Dendritic cell treated with granulocyte-macrophage colony-stimulating factor and Interleukin-4, amounts not matched to agents 40 ng/mL and 50 ng/mL, for 4 days (primary cell): ENCODE measurements at regions of chr15 and their contacts with region 1.

Region 1: DNA sequence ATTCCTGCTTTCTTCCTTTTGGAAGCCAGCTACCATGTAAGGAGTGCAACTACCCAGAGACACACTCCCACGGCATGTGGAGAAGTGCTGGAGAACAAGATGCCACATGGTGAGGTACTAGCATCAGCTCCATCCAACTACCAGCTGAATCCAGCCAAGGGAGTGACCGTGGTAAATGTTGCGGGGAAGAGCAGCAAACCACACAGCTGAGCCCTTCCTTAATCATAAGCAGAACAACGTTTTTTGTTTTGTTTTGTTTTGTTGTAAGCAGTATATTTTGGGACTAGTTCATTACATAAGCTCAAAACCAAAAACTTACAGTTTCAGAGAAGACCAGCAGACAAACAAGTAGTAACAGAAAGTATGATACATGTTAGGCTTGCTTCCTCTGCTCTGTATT is 212.6 kb upstream of the ATP10A start:
- H3K4me3 Mint-ChIP-seq: no peak overlapping the region
- H3K27ac Mint-ChIP-seq: no peak overlapping the region
- H3K4me1 Mint-ChIP-seq: no peaks in the 10 kb centered on the region
- H3K27me3 Mint-ChIP-seq: no peaks in the 10 kb centered on the region

Region 2: DNA sequence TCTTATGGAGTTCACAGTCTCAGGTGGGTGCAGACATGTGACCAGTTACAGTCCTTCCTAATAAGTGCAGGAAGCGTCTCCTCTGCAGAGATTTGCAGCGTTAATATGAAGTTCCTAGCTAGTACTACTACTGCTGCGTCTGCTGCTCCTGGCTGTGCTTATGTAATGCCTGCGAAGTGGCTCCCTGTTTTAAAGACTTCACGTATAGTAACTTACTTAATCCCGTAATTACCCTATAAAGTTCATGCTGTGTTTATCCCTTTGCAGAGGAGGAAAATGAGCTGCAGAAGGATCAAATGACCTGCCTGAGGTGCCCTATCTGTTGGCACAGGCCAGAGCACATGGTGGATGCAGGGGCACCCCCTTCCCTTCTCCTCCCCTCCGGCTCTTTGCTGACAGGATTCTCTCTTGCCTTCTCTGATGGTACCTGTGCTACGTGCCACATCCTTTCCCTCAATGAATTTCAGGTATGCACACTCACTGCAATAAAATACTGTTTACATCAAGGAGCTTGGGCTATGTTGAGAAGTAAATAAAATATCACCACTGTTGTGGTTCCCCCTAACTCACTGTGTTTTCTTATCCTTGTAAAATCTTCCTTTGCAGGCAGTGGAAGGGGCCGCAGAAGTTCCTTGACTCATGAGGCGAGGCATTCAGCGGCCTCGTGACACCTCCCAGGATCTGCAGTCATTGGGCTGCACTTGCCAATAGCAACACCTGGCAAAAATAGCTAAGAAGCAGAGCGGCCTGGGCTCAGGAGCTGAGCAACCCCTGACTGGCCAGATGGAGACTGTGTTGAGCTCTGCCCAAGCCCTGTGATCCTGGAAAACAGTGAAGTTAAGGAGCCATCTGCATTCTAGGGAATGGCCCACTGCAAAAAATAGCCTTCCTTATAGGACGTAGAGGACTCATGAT is 23.8 kb before region 1 on chr15:
- intact Hi-C with region 1: loop called (anchors 1 kb)
- H3K4me3 Mint-ChIP-seq: no peak overlapping the region
- H3K27ac Mint-ChIP-seq: no peak overlapping the region
- H3K4me1 Mint-ChIP-seq: no peaks in the 10 kb centered on the region
- H3K27me3 Mint-ChIP-seq: no peaks in the 10 kb centered on the region

Region 3: GRCh38 chr15:26132811-26133210 is 57.0 kb after region 1 on chr15:
- intact Hi-C with region 1: no loop called
- H3K4me3 Mint-ChIP-seq: no peak overlapping the region
- H3K27ac Mint-ChIP-seq: no peak overlapping the region
- H3K4me1 Mint-ChIP-seq: no peaks in the 10 kb centered on the region
- H3K27me3 Mint-ChIP-seq: no peaks in the 10 kb centered on the region